GM10248 (cell line): ENCODE measurements at regions of chr10 and their contacts with region 1.

Region 1: GRCh38 chr10:101291331-101292193 is 62.3 kb upstream of the LBX1 start:
- DNase-seq: peak; percentile 78
- CTCF ChIP-seq: peak; percentile 51

Region 2: DNA sequence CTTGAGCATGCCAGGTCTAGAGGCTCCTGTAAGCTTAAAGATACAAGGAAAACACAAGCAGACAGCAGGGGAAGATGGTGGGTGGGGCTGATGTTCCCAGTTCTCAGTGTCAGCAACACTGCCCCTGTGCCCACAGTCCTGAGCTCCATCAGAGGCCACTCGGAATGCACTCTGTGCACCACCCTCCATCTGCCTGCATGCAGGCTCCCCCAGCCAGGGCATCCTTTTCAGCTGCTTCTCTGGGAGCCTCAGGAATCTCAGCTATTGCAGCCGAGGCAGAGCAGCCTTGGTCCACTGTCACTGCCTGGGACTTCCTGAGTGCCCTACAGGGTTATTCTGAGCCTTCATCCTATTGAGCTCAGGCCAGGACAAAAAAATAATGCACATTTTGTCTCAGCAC is 84.5 kb before region 1 on chr10:
- CTCF ChIA-PET with region 1: interaction called, 51 read pairs
- POLR2A ChIA-PET with region 1: interaction called, 3 read pairs
- DNase-seq: no peak
- CTCF ChIP-seq: no peak

Region 3: GRCh38 chr10:101272229-101272868 is 19.2 kb before region 1 on chr10:
- CTCF ChIA-PET with region 1: interaction called, 14 read pairs
- POLR2A ChIA-PET with region 1: no interaction called
- DNase-seq: peak; percentile 84
- CTCF ChIP-seq: peak; percentile 81